ENCODE measurements at regions of chr7 and their contacts with region 1.

Region 1: DNA sequence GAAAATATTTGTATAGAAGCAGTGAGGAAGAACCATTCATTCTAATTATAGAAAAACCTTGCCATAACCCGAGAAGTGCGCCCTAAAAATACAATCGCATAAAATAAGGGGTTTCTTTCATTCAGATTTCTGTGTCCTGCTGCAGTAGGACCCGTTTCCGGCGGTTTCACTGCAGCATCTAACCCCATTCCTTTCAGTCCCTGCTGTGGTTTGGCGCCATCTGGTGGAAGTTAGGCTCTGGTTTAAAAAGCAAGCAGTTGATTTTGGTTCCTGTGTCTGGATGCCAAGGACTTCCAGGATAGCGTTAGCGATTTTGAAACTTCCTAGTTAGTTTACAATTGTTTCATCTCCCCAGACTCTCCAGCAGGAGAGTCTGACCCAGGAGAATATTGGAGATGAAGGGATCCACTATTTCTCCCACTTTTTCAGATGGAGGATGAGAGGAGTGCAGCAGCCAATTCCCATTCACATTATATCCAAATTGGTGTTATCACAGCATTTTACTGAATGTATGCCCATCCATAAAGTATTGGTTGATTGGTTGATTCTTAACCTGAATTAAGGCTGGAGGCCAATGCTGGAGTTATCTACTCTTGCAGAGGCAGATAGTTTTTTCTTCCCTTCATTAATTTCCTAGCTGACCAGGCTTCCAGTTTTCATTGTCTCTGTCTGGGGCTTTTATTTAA is 128.8 kb upstream of the CACNA2D1 start:
- DNase-seq: peak; percentile 92
- H3K4me3 ChIP-seq: peak overlapping the region; percentile 20
- H3K27ac ChIP-seq: no peak overlapping the region
- H3K4me1 ChIP-seq: peaks cover 5% of the 10 kb centered on the region
- H3K27me3 ChIP-seq: no peaks in the 10 kb centered on the region
- CTCF ChIP-seq: peak; percentile 95

Region 2: GRCh38 chr7:82044497-82045080 is 527.7 kb before region 1 on chr7:
- CTCF ChIA-PET with region 1: no interaction called
- POLR2A ChIA-PET with region 1: no interaction called
- intact Hi-C with region 1: loop called (anchors 2 kb)
- DNase-seq: peak; percentile 70
- H3K4me3 ChIP-seq: no peak overlapping the region
- H3K27ac ChIP-seq: no peak overlapping the region
- H3K4me1 ChIP-seq: peaks cover 17% of the 10 kb centered on the region
- H3K27me3 ChIP-seq: no peaks in the 10 kb centered on the region
- CTCF ChIP-seq: peak; percentile 76

Region 3: DNA sequence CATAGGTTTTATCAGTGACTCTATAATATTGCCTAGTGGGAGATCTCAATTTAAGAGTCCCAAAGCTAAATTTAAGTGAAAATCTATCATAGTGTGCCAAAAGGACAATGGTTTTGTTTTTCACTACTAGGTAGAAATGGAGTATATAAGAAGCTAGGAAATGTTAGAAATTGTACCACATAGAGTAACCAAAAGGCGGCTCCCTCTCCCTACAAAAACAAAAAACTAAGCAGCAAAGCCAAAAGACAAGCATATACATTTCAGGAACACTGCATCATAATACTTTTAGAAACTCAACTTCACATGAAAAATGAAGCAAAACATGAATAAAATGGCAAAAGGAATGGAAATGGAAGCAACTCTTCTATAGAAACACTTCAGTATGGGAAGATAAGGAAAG is 400.3 kb before region 1 on chr7:
- CTCF ChIA-PET with region 1: no interaction called
- POLR2A ChIA-PET with region 1: no interaction called
- intact Hi-C with region 1: loop called (anchors 2 kb)
- DNase-seq: no peak
- H3K4me3 ChIP-seq: no peak overlapping the region
- H3K27ac ChIP-seq: no peak overlapping the region
- H3K4me1 ChIP-seq: peaks cover 10% of the 10 kb centered on the region
- H3K27me3 ChIP-seq: no peaks in the 10 kb centered on the region
- CTCF ChIP-seq: peak; percentile 35; the same call in 1 of the 2 replicates

Region 4: GRCh38 chr7:82665966-82666507 is 93.7 kb after region 1 on chr7:
- CTCF ChIA-PET with region 1: no interaction called
- POLR2A ChIA-PET with region 1: no interaction called
- intact Hi-C with region 1: no loop called
- DNase-seq: no peak
- H3K4me3 ChIP-seq: no peak overlapping the region
- H3K27ac ChIP-seq: no peak overlapping the region
- H3K4me1 ChIP-seq: no peaks in the 10 kb centered on the region
- H3K27me3 ChIP-seq: no peaks in the 10 kb centered on the region
- CTCF ChIP-seq: no peak